ENCODE measurements at regions of chr1 and their contacts with region 1.

Region 1: DNA sequence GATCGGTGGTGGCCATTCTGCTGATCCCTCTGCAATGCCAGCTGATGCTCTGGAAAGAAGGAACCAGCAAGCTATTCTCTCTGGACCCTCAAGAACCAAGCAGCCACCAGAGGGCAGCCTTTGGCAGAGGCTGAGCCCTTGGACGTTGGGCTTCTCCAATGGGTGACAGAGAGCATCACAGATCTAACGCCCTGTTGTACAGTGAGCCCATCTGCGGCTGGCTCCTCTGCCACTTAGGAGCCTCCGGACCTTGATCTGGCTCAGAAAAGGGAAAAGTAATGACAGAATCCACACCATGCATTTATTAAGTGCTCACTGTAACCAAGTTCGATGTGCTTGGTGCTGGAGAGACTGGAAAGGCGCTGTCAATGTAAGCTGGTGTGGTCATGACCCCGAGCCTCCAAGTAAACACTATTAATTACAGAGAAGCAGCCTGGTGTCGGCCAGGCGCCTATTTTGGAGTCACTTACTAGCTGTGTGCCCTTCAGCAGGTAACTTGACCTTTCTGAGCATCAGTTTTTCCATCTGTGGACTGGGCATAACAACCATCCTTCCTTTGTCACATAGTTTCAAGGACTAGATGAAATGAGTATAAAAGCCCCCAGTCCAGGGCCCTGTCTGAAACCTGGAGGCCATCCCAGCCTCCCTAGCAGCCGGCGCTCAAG is 34.9 kb downstream of the ECE1 start:
- DNase-seq: peak; percentile 91 to 97 (median 95)
- ATAC-seq: peak; percentile 75 to 80
- H3K4me3 ChIP-seq: no peak overlapping the region
- H3K27ac ChIP-seq: peak overlapping the region; percentile 5
- H3K4me1 ChIP-seq: peaks cover 2% of the 10 kb centered on the region
- H3K27me3 ChIP-seq: no peaks in the 10 kb centered on the region

Region 2: DNA sequence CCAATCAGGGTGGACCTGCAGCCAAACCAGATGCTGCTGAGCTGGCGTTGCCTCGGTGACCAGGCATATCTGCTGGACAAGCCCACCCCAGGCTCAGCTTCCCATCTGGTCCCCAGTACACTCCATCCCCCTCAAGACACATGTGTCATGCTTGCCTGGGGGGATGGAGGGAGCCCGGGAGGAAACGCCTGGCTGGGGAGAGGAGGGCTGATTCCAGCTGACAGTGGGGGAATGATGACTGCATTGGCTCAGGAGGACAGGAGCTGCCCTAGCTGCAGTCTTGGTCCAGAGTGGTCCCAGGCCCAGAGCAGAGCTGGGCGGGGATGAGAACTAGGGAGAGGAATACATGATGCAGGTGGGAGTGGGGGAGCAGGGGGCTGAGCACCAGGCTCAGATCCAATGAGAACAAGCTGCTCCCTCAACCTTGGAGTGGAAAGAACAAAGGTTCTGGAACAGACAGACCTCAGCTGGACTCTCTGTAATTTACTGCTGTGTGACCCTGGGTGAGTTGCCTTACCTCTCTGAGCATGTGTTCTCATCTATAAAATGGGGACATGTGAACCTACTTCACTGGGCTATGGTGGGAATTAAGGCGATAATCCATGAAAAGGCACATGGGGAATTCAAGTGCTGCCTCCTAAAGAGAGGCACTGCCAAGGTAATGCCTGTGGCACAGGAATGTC is 57.9 kb after region 1 on chr1:
- intact Hi-C with region 1: no loop called
- DNase-seq: peak; percentile 68 to 78 (median 69)
- ATAC-seq: peak; percentile 5 to 39
- H3K4me3 ChIP-seq: no peak overlapping the region
- H3K27ac ChIP-seq: peak overlapping the region; percentile 27
- H3K4me1 ChIP-seq: peaks cover 21% of the 10 kb centered on the region
- H3K27me3 ChIP-seq: no peaks in the 10 kb centered on the region

Region 3: GRCh38 chr1:21334214-21335087 is 79.0 kb after region 1 on chr1:
- intact Hi-C with region 1: loop called in 2 of 4 experiments (anchors 5 to 10 kb)
- DNase-seq: peak; percentile 79 to 90 (median 89)
- ATAC-seq: peak; percentile 27 to 41
- H3K4me3 ChIP-seq: peak overlapping the region; percentile 2
- H3K27ac ChIP-seq: peak overlapping the region; percentile 71
- H3K4me1 ChIP-seq: peaks cover 40% of the 10 kb centered on the region
- H3K27me3 ChIP-seq: no peaks in the 10 kb centered on the region

Region 4: DNA sequence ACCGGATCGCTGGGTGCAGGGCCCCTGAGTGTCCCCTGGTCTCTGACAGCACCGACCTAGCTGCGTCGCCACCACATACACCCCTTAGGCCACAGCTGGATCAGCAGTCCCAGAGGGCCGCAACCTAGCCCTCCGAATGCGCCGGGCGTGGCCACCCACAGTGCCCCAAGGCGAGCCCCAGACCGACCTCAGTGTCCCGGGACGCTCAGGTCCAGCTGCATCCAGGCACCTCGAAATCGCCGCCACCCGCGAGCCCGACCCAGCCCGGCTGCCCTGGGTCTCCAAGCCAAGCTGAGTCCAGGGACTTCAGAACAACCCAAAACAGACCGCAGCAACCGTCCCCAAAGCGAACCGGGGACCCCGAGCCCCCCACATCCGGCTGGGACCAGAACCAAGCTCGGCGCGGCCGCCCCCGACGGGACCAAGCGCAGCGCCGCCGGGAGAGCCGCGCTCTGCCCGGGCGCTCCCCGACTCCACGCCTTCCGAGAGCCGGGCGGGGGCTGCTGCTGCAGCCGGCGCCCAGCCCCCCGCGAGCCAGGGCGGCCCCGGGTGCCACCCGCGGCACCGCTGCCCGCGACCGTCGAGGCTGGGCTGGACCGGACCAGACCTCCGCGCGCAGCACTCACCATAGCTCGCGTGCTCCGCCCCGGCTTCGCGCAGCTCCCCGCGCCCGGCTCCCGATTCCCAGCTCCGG is 89.5 kb after region 1 on chr1:
- intact Hi-C with region 1: loop called in 3 of 4 experiments (anchors 5 kb)
- DNase-seq: peak; percentile 49 to 75 (median 74)
- ATAC-seq: peak; percentile 6 to 27
- H3K4me3 ChIP-seq: peak overlapping the region; percentile 86
- H3K27ac ChIP-seq: peak overlapping the region; percentile 74
- H3K4me1 ChIP-seq: peaks cover 15% of the 10 kb centered on the region
- H3K27me3 ChIP-seq: no peaks in the 10 kb centered on the region